ENCODE measurements at regions of chr6 and their contacts with region 1.

Region 1: DNA sequence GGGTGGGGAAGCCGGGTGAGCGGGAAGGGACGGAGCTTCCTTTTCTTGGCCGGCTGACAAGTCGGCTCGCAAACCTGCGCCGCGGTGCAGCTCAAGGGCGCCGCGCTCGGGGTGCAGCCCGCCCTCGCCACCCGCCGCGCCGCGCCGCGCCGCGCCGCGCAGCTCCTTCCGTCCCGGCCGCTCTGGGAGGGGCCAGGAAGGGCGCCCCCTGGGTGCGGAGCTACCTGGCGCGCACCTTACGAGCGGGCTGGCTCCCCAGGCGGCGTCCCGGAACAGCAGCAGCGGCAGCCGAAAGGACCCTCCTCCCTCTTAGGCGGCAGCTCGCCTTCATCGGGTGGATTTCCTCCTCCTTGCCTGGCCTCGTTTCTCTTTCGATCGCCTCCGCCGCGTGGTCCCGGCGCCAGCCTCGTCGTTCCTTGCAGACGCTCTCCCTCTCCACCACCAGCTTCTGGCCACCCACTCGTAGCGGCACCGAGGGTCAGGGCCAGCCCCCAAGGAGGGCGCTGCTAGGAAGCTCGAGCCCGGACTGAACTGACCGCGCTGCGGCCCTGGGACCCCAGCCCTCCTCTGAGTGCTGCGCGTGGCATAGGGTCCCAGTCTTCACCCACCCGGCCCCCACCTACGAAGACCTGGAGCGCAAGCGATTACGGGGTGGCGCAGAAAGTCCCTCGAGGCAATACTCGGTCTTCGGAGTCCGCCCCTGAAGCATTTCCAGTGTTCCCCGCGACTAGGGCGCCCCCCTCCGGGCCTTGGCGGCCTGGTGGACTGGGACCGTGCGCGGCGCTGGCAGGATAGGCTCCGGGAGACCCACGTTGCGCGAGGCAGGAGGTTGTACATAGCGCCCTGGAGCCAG is at the start of gene MAP3K5:
- DNase-seq: peak; percentile 90
- H3K4me3 Mint-ChIP-seq: peak within 1 kb of the TSS; percentile 91
- H3K27ac Mint-ChIP-seq: peak within 1 kb of the TSS; percentile 94
- H3K4me1 Mint-ChIP-seq: peaks cover 35% of the 10 kb centered on the region
- H3K27me3 Mint-ChIP-seq: peaks cover 4% of the 10 kb centered on the region
- total RNA-seq, gene MAP3K5: 12.2 and 13.4 TPM in 2 replicates

Region 2: DNA sequence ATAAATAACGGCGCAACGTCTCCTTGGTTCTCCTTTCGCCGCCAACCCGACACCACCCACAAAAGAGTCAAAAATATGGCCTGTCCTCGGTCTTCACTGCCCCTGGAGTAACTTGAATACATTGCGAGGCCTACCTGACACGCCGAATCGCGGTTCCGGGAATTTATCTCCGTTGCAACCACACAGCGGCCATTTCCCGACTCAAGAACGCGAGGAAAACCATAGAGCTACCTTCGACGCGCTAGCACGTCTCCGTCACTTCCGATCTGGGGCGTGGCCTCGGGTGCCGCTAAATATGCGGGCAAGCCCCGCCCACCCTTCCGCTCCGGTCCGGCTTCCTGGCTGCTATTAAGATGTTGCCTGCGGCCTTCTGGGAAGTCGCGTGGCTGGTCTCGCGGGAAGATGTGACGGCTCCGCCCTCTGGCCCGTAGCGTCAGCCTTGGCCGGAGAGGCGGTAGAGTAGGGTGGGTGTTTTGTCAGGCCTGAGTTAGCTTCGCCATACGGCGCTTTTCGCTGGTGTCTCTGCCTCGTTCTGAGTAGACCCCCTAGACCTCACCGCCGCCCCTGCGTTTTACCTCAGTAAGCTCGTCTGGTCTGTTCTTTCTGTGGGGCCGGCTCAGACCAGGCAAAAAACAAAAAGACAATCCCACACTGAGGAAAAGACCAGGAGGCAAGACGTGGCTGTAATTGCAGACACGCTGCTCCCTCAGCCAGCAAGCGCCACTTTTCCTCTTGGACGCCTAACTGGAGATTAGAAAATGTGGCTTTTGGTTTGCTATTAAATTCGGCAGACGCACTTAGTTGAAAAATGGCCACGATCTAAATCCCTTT is 502.8 kb before region 1 on chr6 and contains the start of gene BCLAF1:
- intact Hi-C with region 1: loop called (anchors 1 kb)
- DNase-seq: peak; percentile 100
- H3K4me3 Mint-ChIP-seq: peak within 1 kb of the TSS; percentile 98
- H3K27ac Mint-ChIP-seq: peak within 1 kb of the TSS; percentile 99
- H3K4me1 Mint-ChIP-seq: peaks cover 48% of the 10 kb centered on the region
- H3K27me3 Mint-ChIP-seq: peaks cover 2% of the 10 kb centered on the region
- total RNA-seq, gene BCLAF1: 233 and 237 TPM in 2 replicates

Region 3: GRCh38 chr6:136593748-136594490 is 198.7 kb before region 1 on chr6:
- intact Hi-C with region 1: loop called (anchors 1 kb)
- DNase-seq: peak; percentile 56
- H3K4me3 Mint-ChIP-seq: peak overlapping the region; percentile 75
- H3K27ac Mint-ChIP-seq: peak overlapping the region; percentile 96
- H3K4me1 Mint-ChIP-seq: peaks cover 54% of the 10 kb centered on the region
- H3K27me3 Mint-ChIP-seq: no peaks in the 10 kb centered on the region

Region 4: GRCh38 chr6:136643850-136644596 is 148.6 kb before region 1 on chr6:
- intact Hi-C with region 1: loop called (anchors 1 kb)
- DNase-seq: peak; percentile 62
- H3K4me3 Mint-ChIP-seq: no peak overlapping the region
- H3K27ac Mint-ChIP-seq: no peak overlapping the region
- H3K4me1 Mint-ChIP-seq: peaks cover 5% of the 10 kb centered on the region
- H3K27me3 Mint-ChIP-seq: no peaks in the 10 kb centered on the region

Region 5: GRCh38 chr6:136723780-136724179 is 68.9 kb before region 1 on chr6:
- intact Hi-C with region 1: loop called (anchors 2 kb)
- DNase-seq: peak; percentile 6
- H3K4me3 Mint-ChIP-seq: peak overlapping the region; percentile 6
- H3K27ac Mint-ChIP-seq: peak overlapping the region; percentile 14
- H3K4me1 Mint-ChIP-seq: peaks cover 64% of the 10 kb centered on the region
- H3K27me3 Mint-ChIP-seq: no peaks in the 10 kb centered on the region

Region 6: DNA sequence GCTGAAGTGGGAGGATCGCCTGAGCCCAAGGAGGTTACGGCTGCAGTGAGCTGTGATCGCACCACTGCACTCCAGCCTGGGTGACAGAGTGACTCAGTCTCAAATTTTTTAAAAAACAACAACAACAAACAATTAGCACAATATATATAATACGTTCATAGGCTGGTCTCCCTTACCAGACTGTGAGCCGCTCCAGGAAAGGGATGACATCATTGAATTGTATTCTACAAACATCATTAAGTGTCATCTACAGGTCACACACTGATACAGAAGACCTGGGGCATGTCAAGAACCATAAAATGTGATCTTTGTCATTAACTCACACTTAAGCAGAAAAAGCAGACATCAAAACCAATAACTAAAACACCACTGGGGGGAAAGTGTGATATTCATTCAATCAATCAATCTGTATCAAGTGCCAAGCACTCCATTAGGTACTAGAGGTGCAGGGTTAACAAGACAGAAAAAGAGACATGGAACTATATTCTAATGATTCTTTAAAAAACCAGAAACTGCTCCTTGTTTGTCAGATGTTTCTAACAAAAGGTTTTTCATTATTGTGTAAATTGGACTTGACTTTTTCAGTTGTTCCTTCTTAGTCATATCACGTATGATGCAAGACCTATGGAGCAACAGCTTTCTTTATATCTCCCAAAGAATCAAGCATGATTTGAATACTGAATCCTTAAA is 18.1 kb before region 1 on chr6:
- intact Hi-C with region 1: loop called (anchors 2 kb)
- DNase-seq: no peak
- H3K4me3 Mint-ChIP-seq: no peak overlapping the region
- H3K27ac Mint-ChIP-seq: peak overlapping the region; percentile 70
- H3K4me1 Mint-ChIP-seq: peaks cover 62% of the 10 kb centered on the region
- H3K27me3 Mint-ChIP-seq: no peaks in the 10 kb centered on the region